Activated CD4-positive, alpha-beta T cell treated with anti-CD3 and anti-CD28 coated beads for 36 hours (primary cell): ENCODE measurements at regions of chr3 and their contacts with region 1.

Region 1: DNA sequence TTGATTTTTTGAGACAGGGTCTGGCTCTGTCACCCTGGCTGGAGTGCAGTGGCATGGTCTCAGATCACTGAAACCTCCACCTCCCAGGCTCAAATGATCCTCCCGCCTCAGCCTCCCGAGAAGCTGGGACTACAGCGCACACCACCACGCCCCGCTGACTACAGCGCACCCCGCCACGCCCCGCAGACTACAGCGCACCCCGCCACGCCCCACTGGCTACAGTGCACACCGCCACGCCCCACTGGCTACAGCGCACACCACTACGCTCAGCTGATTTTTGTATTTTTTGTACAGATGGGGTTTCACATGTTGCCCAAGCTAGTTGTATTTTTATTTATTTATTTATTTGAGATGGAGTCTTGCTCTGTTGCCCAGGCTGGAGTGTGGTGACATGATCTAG is 35.6 kb downstream of the SLC51A start:
- DNase-seq: no peak
- ATAC-seq: no peak
- H3K4me3 Mint-ChIP-seq: no peak overlapping the region
- H3K27ac Mint-ChIP-seq: no peak overlapping the region
- H3K4me1 Mint-ChIP-seq: no peaks in the 10 kb centered on the region
- H3K27me3 Mint-ChIP-seq: no peaks in the 10 kb centered on the region

Region 2: DNA sequence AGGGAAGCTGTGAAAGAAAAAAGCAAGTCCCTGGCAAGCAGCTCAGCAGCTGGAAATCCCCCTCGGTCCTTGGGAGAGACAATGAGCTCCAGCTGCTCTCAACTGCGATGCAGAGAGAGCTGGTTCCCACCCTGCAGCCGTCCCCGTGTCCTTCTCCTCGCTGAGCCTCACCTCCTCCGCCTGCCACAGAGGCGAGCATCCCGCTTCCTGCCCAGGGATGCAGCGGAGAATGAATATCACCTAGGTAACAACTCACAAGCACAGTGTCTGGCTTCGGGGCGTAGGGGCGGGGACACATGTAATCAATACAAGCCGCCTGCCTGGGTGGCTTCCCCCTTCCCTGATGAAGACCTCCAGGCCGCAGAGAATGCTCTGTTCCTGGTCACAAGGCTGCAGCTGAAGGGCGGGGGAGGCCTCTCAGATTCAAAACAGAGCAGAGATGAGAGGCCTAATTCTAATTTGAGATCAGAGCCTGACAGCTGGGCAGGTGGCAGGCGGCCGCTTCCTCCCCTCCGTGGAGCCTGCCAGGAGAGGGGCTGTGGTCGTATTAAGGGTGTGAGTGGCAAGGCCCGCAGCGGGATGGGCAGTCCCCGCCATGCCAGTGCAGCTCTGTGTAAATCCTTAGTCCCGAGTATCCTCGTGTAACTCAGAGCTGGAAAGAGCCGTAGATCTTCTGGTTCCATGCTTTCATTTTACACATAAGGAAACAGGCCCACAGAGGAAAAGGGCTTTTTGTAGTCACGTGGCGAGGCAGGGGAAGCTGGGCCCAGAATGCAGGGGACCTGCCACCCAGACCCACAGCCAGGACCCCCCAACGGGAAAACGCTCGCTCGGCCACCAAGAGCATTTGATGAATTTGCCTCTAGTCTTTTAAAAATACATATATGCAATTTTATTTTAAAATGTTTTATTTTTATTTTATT is 65.0 kb before region 1 on chr3:
- CTCF ChIA-PET with region 1: no interaction called
- POLR2A ChIA-PET with region 1: no interaction called
- intact Hi-C with region 1: no loop called
- DNase-seq: peak; percentile 41
- ATAC-seq: peak; percentile 4
- H3K4me3 Mint-ChIP-seq: peak overlapping the region; percentile 36
- H3K27ac Mint-ChIP-seq: peak overlapping the region; percentile 73
- H3K4me1 Mint-ChIP-seq: peaks cover 34% of the 10 kb centered on the region
- H3K27me3 Mint-ChIP-seq: no peaks in the 10 kb centered on the region

Region 3: GRCh38 chr3:196360586-196360985 is 108.7 kb after region 1 on chr3:
- CTCF ChIA-PET with region 1: interaction called, 4 read pairs
- POLR2A ChIA-PET with region 1: interaction called, 3 read pairs
- intact Hi-C with region 1: loop called in 1 of 2 experiments (anchors 5 kb)
- DNase-seq: no peak
- ATAC-seq: no peak
- H3K4me3 Mint-ChIP-seq: no peak overlapping the region
- H3K27ac Mint-ChIP-seq: no peak overlapping the region
- H3K4me1 Mint-ChIP-seq: peaks cover 9% of the 10 kb centered on the region
- H3K27me3 Mint-ChIP-seq: no peaks in the 10 kb centered on the region

Region 4: GRCh38 chr3:196378146-196378841 is 126.4 kb after region 1 on chr3:
- CTCF ChIA-PET with region 1: no interaction called
- POLR2A ChIA-PET with region 1: no interaction called
- intact Hi-C with region 1: no loop called
- DNase-seq: peak; percentile 33
- ATAC-seq: no peak
- H3K4me3 Mint-ChIP-seq: no peak overlapping the region
- H3K27ac Mint-ChIP-seq: no peak overlapping the region
- H3K4me1 Mint-ChIP-seq: peaks cover 3% of the 10 kb centered on the region
- H3K27me3 Mint-ChIP-seq: no peaks in the 10 kb centered on the region

Region 5: DNA sequence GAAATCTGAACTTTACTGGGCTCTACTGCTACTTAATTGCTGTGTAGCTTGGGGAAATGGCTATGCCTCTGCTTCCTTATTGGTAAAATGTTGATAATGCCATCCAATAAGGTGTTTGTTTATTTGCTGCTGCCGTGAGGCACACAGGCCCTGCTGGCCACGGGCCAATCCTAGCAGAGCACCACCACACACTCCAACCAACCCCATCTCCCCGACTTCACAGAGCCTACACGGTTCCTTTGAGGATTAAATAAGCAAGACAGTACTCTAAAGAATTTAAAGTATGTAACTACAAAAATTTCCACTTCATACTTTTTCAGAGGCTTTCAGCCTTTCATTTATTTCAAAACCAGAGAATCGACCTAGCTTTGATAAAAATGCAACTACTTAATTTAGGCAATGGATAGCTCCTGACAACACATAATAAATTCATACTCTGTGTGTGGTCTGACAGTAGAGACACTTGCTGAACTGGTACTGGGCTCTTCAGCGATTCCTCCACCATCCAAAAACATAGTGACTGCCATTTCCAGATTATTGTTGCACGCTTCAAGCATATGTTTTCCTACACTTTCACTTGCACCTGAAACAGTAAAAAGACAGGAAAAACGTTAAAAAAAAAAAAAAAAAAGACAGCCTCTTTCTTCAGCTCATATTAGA is 155.0 kb after region 1 on chr3:
- CTCF ChIA-PET with region 1: no interaction called
- POLR2A ChIA-PET with region 1: no interaction called
- intact Hi-C with region 1: no loop called
- DNase-seq: no peak
- ATAC-seq: no peak
- H3K4me3 Mint-ChIP-seq: no peak overlapping the region
- H3K27ac Mint-ChIP-seq: no peak overlapping the region
- H3K4me1 Mint-ChIP-seq: peaks cover 15% of the 10 kb centered on the region
- H3K27me3 Mint-ChIP-seq: no peaks in the 10 kb centered on the region

Region 6: GRCh38 chr3:196440041-196440537 is 188.2 kb after region 1 on chr3:
- CTCF ChIA-PET with region 1: interaction called, 3 read pairs
- POLR2A ChIA-PET with region 1: no interaction called
- intact Hi-C with region 1: loop called in 1 of 2 experiments (anchors 1 kb)
- DNase-seq: no peak
- ATAC-seq: no peak
- H3K4me3 Mint-ChIP-seq: no peak overlapping the region
- H3K27ac Mint-ChIP-seq: no peak overlapping the region
- H3K4me1 Mint-ChIP-seq: peaks cover 21% of the 10 kb centered on the region
- H3K27me3 Mint-ChIP-seq: no peaks in the 10 kb centered on the region

Region 7: GRCh38 chr3:196518966-196519717 is 267.2 kb after region 1 on chr3:
- CTCF ChIA-PET with region 1: interaction called, 20 read pairs
- POLR2A ChIA-PET with region 1: no interaction called
- intact Hi-C with region 1: loop called (anchors 1 kb)
- DNase-seq: peak; percentile 84
- ATAC-seq: peak; percentile 73
- H3K4me3 Mint-ChIP-seq: no peak overlapping the region
- H3K27ac Mint-ChIP-seq: no peak overlapping the region
- H3K4me1 Mint-ChIP-seq: no peaks in the 10 kb centered on the region
- H3K27me3 Mint-ChIP-seq: peaks cover 2% of the 10 kb centered on the region